H1 (cell line): ENCODE measurements at regions of chr5 and their contacts with region 1.

Region 1: GRCh38 chr5:153661897-153662530 is 171.5 kb downstream of the GRIA1 start:
- DNase-seq: no peak
- H3K4me3 ChIP-seq: no peak overlapping the region
- H3K27ac ChIP-seq: no peak overlapping the region
- H3K4me1 ChIP-seq: peaks cover 0 to 6% (median 0%) of the 10 kb centered on the region in 4 experiments; a peak in 2 of 7 replicates
- H3K27me3 ChIP-seq: 0 out of 7 replicates have a peak, but pooled peaks cover 0 to 2% (median 0%) of the 10 kb centered on the region in 4 experiments
- CTCF ChIP-seq: no peak
- EP300 ChIP-seq: no peak
- POLR2A ChIP-seq: no peak
- RAD21 ChIP-seq: no peak

Region 2: GRCh38 chr5:153678617-153679329 is 16.8 kb after region 1 on chr5:
- CTCF ChIA-PET with region 1: interaction called, 10 read pairs
- POLR2A ChIA-PET with region 1: no interaction called
- DNase-seq: no peak
- H3K4me3 ChIP-seq: no peak overlapping the region
- H3K27ac ChIP-seq: no peak overlapping the region
- H3K4me1 ChIP-seq: no peaks in the 10 kb centered on the region
- H3K27me3 ChIP-seq: no peaks in the 10 kb centered on the region
- CTCF ChIP-seq: no peak
- EP300 ChIP-seq: no peak
- POLR2A ChIP-seq: no peak
- RAD21 ChIP-seq: no peak